ENCODE measurements at regions of chr3 and their contacts with region 1.

Region 1: GRCh38 chr3:123066896-123067688 is at the start of gene PDIA5:
- DNase-seq: peak; percentile 67 to 96
- H3K4me3 ChIP-seq: peak within 1 kb of the TSS; percentile 86 to 92
- H3K27ac ChIP-seq: peak within 1 kb of the TSS; percentile 78 to 82
- H3K4me1 ChIP-seq: peaks cover 6 to 21% of the 10 kb centered on the region in 2 donors
- H3K27me3 ChIP-seq: no peaks in the 10 kb centered on the region
- CTCF ChIP-seq: no peak
- total RNA-seq, gene PDIA5: 21.3 TPM

Region 2: DNA sequence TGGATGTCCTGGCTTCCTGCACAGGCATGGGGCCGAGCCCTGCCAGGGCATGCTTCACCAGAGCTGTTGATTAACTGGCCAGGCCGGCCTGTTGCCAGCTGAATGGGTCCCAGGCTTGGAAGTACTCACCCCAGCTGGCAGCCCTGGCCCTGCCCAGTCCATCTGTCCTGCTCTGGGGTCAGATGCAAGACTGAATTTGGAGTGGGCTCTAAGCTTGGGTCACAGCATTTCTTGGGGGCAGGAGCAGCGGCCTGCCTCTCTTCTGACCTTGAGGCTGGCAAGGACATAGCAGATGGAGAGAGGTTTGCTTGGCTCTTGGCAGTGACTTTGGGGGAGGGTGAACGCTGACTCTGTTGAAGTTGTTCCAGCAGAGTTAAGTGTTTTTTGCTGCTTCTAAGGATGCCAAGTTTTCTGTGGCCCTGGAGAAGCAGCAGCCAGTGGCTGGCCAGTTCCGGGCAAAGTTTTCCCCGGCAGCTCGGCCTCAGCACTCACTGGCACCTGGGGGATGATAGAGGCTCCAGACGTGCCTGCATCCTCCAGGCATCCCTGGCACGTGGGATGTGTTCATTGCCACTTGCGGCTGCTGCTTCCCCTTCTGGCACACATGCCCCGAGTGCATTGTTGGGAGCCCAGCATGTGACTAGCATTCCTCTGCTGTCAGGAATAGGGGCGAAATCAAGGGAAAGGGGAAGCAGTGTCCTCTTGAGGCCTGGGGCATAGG is 22.7 kb after region 1 on chr3:
- intact Hi-C with region 1: loop called (anchors 2 kb)
- DNase-seq: peak in 1 of 2 donors; percentile 82
- H3K4me3 ChIP-seq: no peak overlapping the region
- H3K27ac ChIP-seq: peak overlapping the region; percentile 54 to 70
- H3K4me1 ChIP-seq: peaks cover 19 to 42% of the 10 kb centered on the region in 2 donors
- H3K27me3 ChIP-seq: no peaks in the 10 kb centered on the region
- CTCF ChIP-seq: no peak

Region 3: DNA sequence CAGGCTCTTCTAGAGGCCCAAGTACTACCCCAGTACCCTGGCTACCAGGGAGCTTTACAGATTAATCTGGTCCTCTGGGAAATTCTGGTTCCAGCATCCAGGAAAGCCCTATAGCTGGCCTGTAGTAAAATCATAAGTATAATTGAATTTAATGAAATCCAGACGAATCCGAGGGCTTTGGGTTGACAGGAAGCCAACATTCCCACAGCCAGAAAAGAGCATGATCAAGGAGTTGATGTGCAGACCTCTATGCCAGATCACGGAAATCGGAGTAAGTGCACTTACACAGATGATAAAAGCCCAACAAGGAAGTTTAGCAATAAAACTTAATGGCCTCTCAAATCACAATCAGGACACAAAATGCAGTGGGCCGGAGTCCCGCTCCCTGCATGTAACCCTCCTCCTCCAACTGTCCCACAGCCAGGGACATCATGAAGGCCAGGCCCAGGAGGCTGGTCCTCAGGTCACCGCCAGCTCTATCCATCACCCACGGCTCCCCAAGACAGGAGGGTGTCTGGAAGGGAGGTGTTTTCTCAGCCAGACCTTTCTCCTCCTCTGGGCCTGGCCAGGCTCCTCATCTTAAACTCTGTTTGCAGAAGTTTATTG is 71.8 kb after region 1 on chr3:
- intact Hi-C with region 1: no loop called
- DNase-seq: no peak
- H3K4me3 ChIP-seq: no peak overlapping the region
- H3K27ac ChIP-seq: no peak overlapping the region
- H3K4me1 ChIP-seq: no peaks in the 10 kb centered on the region
- H3K27me3 ChIP-seq: no peaks in the 10 kb centered on the region
- CTCF ChIP-seq: no peak

Measured in ascending aorta (tissue), 2 donors.